Activated CD8-positive, alpha-beta memory T cell treated with anti-CD3 and anti-CD28 coated beads, Interleukin-2, amount 10 ng/mL, durations not matched to agents 7 days and 5 days (primary cell): ENCODE measurements at regions of chr17 and their contacts with region 1.

Region 1: DNA sequence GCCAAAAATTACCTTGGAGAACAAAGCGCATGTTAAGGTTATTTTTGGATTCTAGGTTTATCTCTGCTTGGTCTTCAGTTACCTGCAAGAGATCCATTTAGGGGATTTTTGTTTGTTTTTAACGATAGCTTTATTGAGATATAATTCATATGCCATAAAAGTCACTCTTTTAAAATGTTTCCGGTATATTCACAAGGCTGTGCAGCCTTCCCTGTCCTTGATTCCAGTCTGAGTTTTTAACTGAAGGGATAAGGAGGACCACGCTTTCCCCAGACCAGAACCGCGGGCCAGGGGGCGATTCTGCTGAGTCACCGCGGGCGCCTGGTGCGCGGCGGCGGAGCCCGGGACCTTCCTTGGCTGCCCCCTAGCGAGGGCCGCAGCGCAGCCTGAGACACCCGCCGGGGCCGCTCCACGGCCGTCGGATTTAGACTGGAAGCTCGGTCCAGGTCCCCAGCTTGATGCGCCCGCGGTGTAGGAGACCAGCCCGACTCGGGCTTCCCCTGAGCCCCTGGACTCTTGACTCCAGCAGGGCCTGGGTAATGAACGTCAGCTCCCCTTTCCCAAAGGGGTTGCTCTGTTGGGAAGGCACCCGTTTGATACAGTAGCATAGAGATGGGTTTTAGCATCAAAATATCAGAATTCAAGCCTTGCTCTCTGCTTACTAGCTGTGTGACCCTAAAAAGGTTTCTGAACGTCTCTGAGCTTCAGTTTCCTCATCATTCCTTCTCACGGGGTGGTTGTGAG is 50.0 kb upstream of the STH start:
- DNase-seq: peak; percentile 75
- ATAC-seq: peak; percentile 99
- H3K4me3 Mint-ChIP-seq: peak overlapping the region; percentile 53
- H3K27ac Mint-ChIP-seq: no peak overlapping the region
- H3K4me1 Mint-ChIP-seq: peaks cover 9% of the 10 kb centered on the region
- H3K27me3 Mint-ChIP-seq: peaks cover 43% of the 10 kb centered on the region

Region 2: DNA sequence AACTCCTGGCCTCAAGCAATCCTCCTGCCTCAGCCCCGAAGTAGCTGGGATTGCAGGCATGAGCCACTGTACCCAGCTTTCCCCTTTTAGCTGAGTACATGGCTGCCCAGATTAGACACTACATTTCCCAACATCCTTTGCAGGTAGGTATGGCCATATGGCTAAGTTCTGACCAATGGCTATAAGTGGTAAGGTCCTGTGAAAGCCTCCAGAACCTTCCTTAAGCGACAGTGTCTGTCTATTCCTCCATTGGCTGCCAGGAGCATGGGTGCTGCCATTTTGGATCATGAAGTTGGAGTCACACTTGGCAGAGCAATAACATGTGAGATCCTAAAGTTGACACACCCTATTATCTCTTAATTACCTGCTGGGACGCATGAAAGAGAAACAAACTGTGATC is 189.3 kb before region 1 on chr17:
- CTCF ChIA-PET with region 1: no interaction called
- DNase-seq: no peak
- ATAC-seq: no peak
- H3K4me3 Mint-ChIP-seq: no peak overlapping the region
- H3K27ac Mint-ChIP-seq: no peak overlapping the region
- H3K4me1 Mint-ChIP-seq: no peaks in the 10 kb centered on the region
- H3K27me3 Mint-ChIP-seq: peaks cover 25% of the 10 kb centered on the region

Region 3: DNA sequence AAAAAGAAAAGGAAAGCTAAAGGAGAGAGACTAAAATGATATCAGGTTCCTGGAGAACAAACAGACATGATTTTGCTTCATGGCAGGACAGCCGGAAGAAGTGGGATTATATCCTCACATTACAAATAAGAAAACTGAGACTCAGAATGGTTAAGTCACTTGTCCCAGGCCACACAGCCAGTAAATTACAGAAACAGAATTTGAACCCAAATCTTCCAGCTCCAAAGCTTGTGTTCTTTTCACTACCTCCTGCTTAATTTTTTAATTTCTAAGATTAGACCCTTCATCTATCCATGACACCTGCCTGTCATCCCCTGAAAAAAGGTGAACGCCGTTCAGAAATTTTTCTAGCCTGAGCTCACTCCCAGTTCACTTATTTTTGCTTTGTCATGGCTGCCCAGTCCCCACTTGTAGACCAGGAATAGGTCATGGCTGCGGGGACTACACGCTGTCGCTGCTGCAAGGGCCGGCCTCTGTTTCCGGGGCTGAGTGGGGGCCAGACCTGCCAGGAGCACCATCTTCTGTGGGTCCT is 18.6 kb before region 1 on chr17:
- CTCF ChIA-PET with region 1: interaction called, 10 read pairs
- DNase-seq: no peak
- ATAC-seq: no peak
- H3K4me3 Mint-ChIP-seq: no peak overlapping the region
- H3K27ac Mint-ChIP-seq: no peak overlapping the region
- H3K4me1 Mint-ChIP-seq: no peaks in the 10 kb centered on the region
- H3K27me3 Mint-ChIP-seq: peaks cover 35% of the 10 kb centered on the region

Region 4: GRCh38 chr17:45961206-45961605 is 12.2 kb after region 1 on chr17:
- CTCF ChIA-PET with region 1: interaction called, 10 read pairs
- DNase-seq: no peak
- ATAC-seq: no peak
- H3K4me3 Mint-ChIP-seq: no peak overlapping the region
- H3K27ac Mint-ChIP-seq: no peak overlapping the region
- H3K4me1 Mint-ChIP-seq: peaks cover 2% of the 10 kb centered on the region
- H3K27me3 Mint-ChIP-seq: peaks cover 17% of the 10 kb centered on the region